BJ (cell line): ENCODE measurements at regions of chr11 and their contacts with region 1.

Region 1: GRCh38 chr11:62905927-62906531 is 15.1 kb downstream of the CHRM1 start:
- DNase-seq: no peak
- H3K4me3 ChIP-seq: no peak overlapping the region
- H3K27me3 ChIP-seq: no peaks in the 10 kb centered on the region
- CTCF ChIP-seq: peak; percentile 100

Region 2: DNA sequence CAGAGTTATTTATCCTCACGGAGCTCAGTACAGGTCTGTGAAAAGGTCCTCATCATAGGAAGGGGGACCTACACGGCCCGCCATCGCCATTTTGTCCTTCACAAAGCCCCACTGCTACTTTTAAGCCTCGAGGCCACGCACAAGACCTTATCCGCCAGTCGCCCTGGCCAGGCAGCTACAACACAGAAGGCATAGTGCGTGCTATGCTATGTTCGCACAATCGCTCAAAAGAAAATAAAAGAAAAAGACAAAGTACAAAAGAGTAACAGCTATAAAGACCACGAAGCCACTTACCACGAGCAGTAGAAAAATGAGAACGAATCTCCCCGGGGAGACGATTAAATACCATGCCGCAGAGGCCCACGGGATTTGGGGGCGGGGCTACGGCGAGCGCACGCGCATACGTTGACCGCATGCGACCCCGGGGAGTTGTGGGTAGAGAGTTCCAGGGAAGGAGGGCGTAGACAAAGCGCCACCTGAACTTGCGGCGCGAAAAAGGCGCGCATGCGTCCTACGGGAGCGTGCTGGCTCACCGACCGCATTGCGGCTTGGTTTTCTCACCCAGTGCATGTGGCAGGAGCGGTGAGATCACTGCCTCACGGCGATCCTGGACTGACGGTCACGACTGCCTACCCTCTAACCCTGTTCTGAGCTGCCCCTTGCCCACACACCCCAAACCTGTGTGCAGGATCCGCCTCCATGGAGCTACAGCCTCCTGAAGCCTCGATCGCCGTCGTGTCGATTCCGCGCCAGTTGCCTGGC is 50.3 kb before region 1 on chr11:
- CTCF ChIA-PET with region 1: no interaction called
- POLR2A ChIA-PET with region 1: no interaction called
- DNase-seq: peak; percentile 86
- H3K4me3 ChIP-seq: peak overlapping the region; percentile 67
- H3K27me3 ChIP-seq: no peaks in the 10 kb centered on the region
- CTCF ChIP-seq: no peak

Region 3: GRCh38 chr11:62889484-62890437 is 16.3 kb before region 1 on chr11:
- CTCF ChIA-PET with region 1: interaction called, 15 read pairs
- POLR2A ChIA-PET with region 1: no interaction called
- DNase-seq: no peak
- H3K4me3 ChIP-seq: no peak overlapping the region
- H3K27me3 ChIP-seq: no peaks in the 10 kb centered on the region
- CTCF ChIP-seq: no peak

Region 4: GRCh38 chr11:62922658-62923431 is 16.8 kb after region 1 on chr11:
- CTCF ChIA-PET with region 1: interaction called, 40 read pairs
- POLR2A ChIA-PET with region 1: no interaction called
- DNase-seq: no peak
- H3K4me3 ChIP-seq: no peak overlapping the region
- H3K27me3 ChIP-seq: peaks cover 19% of the 10 kb centered on the region
- CTCF ChIP-seq: peak; percentile 37; the same call in 1 of the 2 replicates

Region 5: DNA sequence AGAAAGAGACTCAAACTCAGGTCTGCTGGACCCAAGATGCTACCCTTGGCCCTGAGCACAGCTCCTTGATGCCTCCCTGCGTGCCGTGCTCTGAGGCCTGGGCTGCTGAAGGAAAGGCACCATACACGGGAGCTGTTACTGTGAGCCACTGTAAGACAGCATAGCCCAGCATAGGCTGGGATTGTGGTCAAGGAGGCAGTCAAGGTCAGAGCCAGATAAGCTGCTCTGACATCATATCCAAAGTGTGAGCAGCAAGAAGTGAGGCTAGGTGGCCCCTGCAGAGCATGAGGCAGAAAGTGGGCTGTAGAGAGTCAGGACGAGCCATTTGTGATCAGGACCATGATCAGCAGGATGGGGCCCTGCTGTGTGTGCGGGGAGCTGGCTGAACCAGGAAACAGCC is 101.9 kb after region 1 on chr11:
- CTCF ChIA-PET with region 1: interaction called, 25 read pairs
- POLR2A ChIA-PET with region 1: no interaction called
- DNase-seq: no peak
- H3K4me3 ChIP-seq: no peak overlapping the region
- H3K27me3 ChIP-seq: peaks cover 4% of the 10 kb centered on the region; the same call in 1 of the 2 replicates
- CTCF ChIP-seq: no peak

Region 6: DNA sequence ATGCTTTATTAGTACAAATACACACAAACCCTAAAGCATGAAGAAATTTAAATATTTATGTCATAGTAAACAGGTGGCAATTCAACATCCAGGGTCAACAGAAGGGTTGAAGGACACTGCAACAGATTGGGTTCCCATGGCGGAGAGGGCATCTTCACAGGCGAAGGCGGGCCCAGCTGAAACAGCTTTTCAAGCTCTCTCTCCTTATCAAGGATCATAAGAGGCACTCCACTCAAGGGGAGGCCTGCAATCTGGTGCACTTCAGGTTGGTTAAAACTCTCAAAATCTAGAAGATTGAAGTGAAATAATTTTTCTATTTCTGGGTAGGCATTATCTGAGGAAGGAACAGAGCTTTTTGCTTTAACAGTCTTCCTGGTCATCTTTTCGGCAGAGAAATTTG is 126.4 kb after region 1 on chr11:
- CTCF ChIA-PET with region 1: interaction called, 92 read pairs
- POLR2A ChIA-PET with region 1: no interaction called
- DNase-seq: no peak
- H3K4me3 ChIP-seq: no peak overlapping the region
- H3K27me3 ChIP-seq: peaks cover 3% of the 10 kb centered on the region; the same call in 1 of the 2 replicates
- CTCF ChIP-seq: no peak